ENCODE measurements at regions of chr7 and their contacts with region 1.

Region 1: DNA sequence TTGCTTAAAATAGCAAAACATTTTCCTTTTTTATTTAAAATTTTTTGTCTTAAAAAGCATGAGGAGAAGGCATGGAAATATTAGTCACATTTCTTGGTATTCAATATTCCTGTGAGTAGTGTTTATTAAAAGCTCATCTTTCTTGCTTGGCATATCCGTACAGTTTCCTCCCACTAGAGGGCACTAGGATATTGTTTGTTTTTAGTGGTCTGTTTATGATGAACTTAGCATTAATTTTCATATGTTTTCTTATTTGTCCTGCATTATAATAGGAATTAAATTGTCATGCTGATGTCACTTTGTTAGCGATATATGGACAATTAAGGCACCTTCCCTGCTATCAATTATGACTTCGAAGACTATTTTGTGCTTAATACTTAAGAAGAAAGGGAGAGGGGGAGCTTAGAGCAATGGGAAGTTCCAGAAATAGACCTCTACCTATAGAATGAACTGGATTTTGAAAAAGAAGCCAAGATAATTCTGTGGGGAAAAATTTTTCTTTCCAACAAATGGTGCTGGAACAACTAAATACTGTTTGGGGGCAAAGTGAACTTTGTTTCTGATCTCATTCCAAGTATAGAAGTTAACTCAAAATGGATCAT is 91.0 kb upstream of the STRIP2 start:
- DNase-seq: peak; percentile 9
- ATAC-seq: peak; percentile 36
- H3K4me3 Mint-ChIP-seq: no peak overlapping the region
- H3K27ac Mint-ChIP-seq: no peak overlapping the region
- H3K4me1 Mint-ChIP-seq: peaks cover 29% of the 10 kb centered on the region
- H3K27me3 Mint-ChIP-seq: no peaks in the 10 kb centered on the region

Region 2: DNA sequence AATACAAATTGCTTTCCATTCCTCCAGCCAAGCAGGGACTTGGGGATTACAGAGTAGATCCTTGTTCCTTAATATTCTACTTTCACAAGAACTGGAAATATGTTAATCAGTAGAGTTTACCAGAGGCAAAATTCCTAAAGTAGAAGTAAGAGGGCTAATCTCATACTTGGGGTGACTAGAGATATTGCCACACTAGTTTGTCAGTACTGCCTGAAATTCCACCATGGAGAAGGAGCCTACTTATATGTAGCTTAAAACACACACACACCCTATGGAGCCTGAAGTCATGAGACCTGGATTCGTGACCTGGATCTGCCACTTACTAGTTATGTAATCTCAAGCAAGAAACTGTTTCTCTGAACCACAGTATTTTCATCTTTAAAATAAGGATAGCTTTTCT is 124.9 kb after region 1 on chr7:
- CTCF ChIA-PET with region 1: interaction called, 48 read pairs
- POLR2A ChIA-PET with region 1: interaction called, 7 read pairs
- intact Hi-C with region 1: loop called (anchors 1 to 2 kb)
- DNase-seq: no peak
- ATAC-seq: no peak
- H3K4me3 Mint-ChIP-seq: no peak overlapping the region
- H3K27ac Mint-ChIP-seq: no peak overlapping the region
- H3K4me1 Mint-ChIP-seq: peaks cover 16% of the 10 kb centered on the region
- H3K27me3 Mint-ChIP-seq: no peaks in the 10 kb centered on the region

Region 3: DNA sequence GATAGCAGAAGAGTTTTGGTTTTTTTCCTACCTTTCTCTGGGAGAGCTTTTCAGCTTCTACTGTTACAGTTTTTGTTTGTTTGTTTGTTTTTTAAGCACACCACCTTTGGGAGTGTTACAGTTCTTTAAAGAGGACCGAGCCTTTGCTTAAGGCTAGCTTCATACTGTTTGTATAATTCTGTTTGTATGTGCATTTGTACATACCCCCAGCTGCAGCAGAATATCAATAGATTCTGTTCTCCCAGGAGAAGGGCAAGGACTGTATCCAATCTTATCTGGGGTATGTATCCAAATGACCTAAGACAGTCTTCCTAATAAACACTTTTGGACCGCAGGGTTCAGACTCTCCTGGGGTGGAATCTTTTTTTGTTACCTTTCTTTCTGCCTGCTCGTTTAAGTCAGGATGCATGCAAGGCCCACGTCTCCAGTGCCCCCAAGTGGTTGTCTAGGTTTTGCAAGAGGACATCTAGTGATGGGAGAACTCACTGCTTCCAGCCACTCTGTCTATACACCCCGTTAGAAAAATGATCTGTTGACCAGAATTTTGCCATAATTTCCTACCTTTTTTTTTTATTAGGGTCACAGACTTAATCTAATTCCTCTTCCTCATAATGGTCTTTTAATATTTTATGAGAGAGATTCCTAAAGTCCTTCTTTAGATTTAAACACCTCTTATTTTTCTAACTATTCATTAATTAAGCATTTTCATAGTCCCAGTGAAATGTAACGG is 292.3 kb after region 1 on chr7:
- CTCF ChIA-PET with region 1: interaction called, 6 read pairs
- POLR2A ChIA-PET with region 1: interaction called, 3 read pairs
- intact Hi-C with region 1: loop called (anchors 5 kb)
- DNase-seq: peak; percentile 84
- ATAC-seq: peak; percentile 97
- H3K4me3 Mint-ChIP-seq: no peak overlapping the region
- H3K27ac Mint-ChIP-seq: peak overlapping the region; percentile 65
- H3K4me1 Mint-ChIP-seq: peaks cover 37% of the 10 kb centered on the region
- H3K27me3 Mint-ChIP-seq: no peaks in the 10 kb centered on the region

Region 4: GRCh38 chr7:129650056-129650758 is 307.0 kb after region 1 on chr7:
- CTCF ChIA-PET with region 1: no interaction called
- POLR2A ChIA-PET with region 1: no interaction called
- intact Hi-C with region 1: no loop called
- DNase-seq: no peak
- ATAC-seq: peak; percentile 68
- H3K4me3 Mint-ChIP-seq: no peak overlapping the region
- H3K27ac Mint-ChIP-seq: peak overlapping the region; percentile 79
- H3K4me1 Mint-ChIP-seq: peaks cover 49% of the 10 kb centered on the region
- H3K27me3 Mint-ChIP-seq: no peaks in the 10 kb centered on the region

Measured in activated CD4-positive, alpha-beta T cell treated with anti-CD3 and anti-CD28 coated beads for 36 hours (primary cell).